MCF 10A (cell line): ENCODE measurements at regions of chr5 and their contacts with region 1.

Region 1: DNA sequence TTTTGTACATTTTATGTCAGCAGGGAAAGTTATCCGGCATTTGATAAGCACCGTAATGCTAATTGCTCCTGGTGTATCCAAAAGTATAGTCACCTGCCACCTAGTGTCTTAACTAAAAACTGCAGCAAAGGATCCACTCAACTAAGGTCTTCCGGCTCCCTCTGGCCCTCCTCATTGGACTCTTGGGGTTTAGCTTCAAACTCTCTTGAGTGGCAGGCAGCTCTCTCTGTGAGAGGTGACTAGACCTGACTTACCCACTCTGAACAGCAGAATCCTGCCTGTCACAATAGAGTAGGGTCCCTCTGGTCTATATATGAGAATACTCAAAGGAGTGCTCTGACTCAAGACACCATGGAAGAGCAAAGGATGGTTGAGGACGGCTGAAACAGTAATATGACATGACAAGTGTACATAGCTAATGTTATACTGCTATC is 60.3 kb upstream of the CAST start:
- DNase-seq: peak; percentile 86
- H3K4me3 Mint-ChIP-seq: no peak overlapping the region
- H3K27ac Mint-ChIP-seq: no peak overlapping the region
- H3K4me1 Mint-ChIP-seq: peaks cover 6% of the 10 kb centered on the region
- H3K27me3 Mint-ChIP-seq: no peaks in the 10 kb centered on the region
- CTCF ChIP-seq: peak; percentile 65

Region 2: DNA sequence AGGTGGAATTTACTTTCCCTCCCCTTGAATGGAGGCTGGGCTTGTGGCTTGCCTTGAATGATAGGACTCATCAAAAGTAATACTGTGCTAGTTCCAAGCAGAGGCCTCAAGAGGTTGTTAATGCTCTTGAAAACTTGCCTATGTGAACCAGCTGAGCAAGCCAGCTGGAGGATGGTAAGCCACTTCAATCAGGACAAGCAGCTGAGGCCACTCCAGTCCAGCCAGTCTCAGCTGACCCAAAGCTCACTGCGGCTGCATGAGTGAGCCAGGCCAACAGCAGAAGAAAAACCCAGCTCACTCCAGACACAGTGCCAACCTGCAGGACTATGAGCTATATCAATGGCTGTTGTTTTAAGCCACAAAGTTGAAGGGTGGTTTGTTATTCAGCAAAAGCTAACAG is 1499.7 kb before region 1 on chr5:
- CTCF ChIA-PET with region 1: no interaction called
- POLR2A ChIA-PET with region 1: no interaction called
- intact Hi-C with region 1: no loop called
- DNase-seq: no peak
- H3K4me3 Mint-ChIP-seq: no peak overlapping the region
- H3K27ac Mint-ChIP-seq: no peak overlapping the region
- H3K4me1 Mint-ChIP-seq: no peaks in the 10 kb centered on the region
- H3K27me3 Mint-ChIP-seq: no peaks in the 10 kb centered on the region
- CTCF ChIP-seq: no peak

Region 3: GRCh38 chr5:95961617-95962474 is 640.0 kb before region 1 on chr5 and contains the start of gene ELL2:
- CTCF ChIA-PET with region 1: interaction called, 3 read pairs
- POLR2A ChIA-PET with region 1: no interaction called
- intact Hi-C with region 1: loop called (anchors 5 kb)
- DNase-seq: peak; percentile 98
- H3K4me3 Mint-ChIP-seq: peak within 1 kb of the TSS; percentile 90
- H3K27ac Mint-ChIP-seq: peak within 1 kb of the TSS; percentile 91
- H3K4me1 Mint-ChIP-seq: peaks cover 28% of the 10 kb centered on the region
- H3K27me3 Mint-ChIP-seq: no peaks in the 10 kb centered on the region
- CTCF ChIP-seq: no peak
- total RNA-seq, gene ELL2: 144 and 147 TPM in 2 replicates

Region 4: DNA sequence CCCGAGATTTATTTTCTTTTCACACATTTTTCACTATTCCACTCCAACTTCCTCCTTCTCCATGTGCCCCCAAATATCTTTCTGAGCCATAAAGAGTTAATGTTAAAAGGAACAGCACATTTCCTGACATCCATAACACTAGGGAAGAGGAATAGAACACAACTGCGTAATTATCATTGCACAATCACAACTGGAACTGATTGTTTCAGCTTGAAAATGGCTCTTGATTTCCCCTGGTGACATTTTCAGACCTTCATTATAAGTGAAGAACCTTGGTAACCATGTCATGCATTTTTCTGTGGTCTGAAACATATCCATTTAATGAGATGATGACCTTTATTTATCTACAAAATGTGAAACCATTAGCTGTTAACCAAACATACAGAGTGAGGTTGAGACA is 251.2 kb before region 1 on chr5:
- CTCF ChIA-PET with region 1: interaction called, 492 read pairs
- POLR2A ChIA-PET with region 1: interaction called, 16 read pairs
- intact Hi-C with region 1: no loop called
- DNase-seq: peak; percentile 32
- H3K4me3 Mint-ChIP-seq: no peak overlapping the region
- H3K27ac Mint-ChIP-seq: peak overlapping the region; percentile 2
- H3K4me1 Mint-ChIP-seq: peaks cover 11% of the 10 kb centered on the region
- H3K27me3 Mint-ChIP-seq: no peaks in the 10 kb centered on the region
- CTCF ChIP-seq: no peak

Region 5: GRCh38 chr5:96463106-96463505 is 138.7 kb before region 1 on chr5:
- CTCF ChIA-PET with region 1: no interaction called
- POLR2A ChIA-PET with region 1: no interaction called
- intact Hi-C with region 1: no loop called
- DNase-seq: peak; percentile 64
- H3K4me3 Mint-ChIP-seq: no peak overlapping the region
- H3K27ac Mint-ChIP-seq: no peak overlapping the region
- H3K4me1 Mint-ChIP-seq: peaks cover 6% of the 10 kb centered on the region
- H3K27me3 Mint-ChIP-seq: no peaks in the 10 kb centered on the region
- CTCF ChIP-seq: no peak

Region 6: DNA sequence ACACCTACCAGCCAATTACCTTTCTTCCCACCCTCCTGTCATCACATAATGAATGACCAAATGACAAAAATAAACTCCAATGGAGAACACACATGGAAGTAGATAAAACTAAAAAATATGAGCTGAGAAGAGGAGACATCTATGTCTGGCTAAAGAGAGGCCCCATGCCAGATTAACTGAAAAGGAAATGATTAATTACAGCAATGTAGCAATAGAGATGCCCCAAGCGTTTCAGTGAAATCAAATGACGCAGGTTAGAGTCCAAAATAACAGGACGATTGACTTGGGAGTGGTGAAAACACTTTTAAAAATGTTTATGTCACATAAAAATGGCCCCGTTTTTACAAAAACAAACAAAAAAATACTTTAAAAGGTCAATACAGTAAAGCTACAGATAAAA is 109.2 kb before region 1 on chr5:
- CTCF ChIA-PET with region 1: interaction called, 10 read pairs
- POLR2A ChIA-PET with region 1: interaction called, 3 read pairs
- intact Hi-C with region 1: no loop called
- DNase-seq: peak; percentile 95
- H3K4me3 Mint-ChIP-seq: peak overlapping the region; percentile 40
- H3K27ac Mint-ChIP-seq: peak overlapping the region; percentile 96
- H3K4me1 Mint-ChIP-seq: peaks cover 10% of the 10 kb centered on the region
- H3K27me3 Mint-ChIP-seq: no peaks in the 10 kb centered on the region
- CTCF ChIP-seq: no peak

Region 7: GRCh38 chr5:96565582-96566265 is 36.1 kb before region 1 on chr5:
- CTCF ChIA-PET with region 1: interaction called, 13 read pairs
- POLR2A ChIA-PET with region 1: no interaction called
- intact Hi-C with region 1: no loop called
- DNase-seq: peak; percentile 65
- H3K4me3 Mint-ChIP-seq: no peak overlapping the region
- H3K27ac Mint-ChIP-seq: peak overlapping the region; percentile 27
- H3K4me1 Mint-ChIP-seq: peaks cover 25% of the 10 kb centered on the region
- H3K27me3 Mint-ChIP-seq: no peaks in the 10 kb centered on the region
- CTCF ChIP-seq: no peak

Region 8: DNA sequence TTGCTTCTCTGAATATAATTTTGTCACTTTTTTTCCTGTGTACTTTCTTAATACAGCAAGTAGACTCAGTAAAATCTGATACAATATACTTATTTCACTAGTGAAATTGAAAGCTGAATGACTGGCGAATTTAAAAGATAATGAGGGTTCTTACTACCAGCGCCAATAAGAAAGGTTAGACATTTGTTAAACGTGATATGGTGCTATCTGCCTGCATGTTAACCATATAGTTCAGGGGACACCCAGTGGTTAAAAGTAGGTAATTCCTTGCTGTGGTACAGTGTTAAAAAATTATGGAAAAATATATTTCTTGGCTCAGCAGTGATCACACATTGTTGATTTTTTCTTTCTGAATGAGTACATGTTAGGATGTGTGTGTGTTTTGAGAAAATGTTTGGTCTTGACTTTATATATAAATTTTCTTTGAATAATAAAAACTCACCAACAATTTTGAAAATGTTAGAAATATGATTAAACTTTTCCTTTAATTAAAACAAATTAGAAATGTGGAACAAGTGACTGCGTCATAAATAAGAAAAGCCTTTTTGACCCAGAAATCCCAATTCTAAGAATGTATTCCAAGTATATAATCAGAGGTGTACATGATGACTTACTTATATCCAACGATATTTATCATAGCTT is 86.1 kb after region 1 on chr5:
- CTCF ChIA-PET with region 1: interaction called, 15 read pairs
- POLR2A ChIA-PET with region 1: no interaction called
- intact Hi-C with region 1: no loop called
- DNase-seq: peak; percentile 66
- H3K4me3 Mint-ChIP-seq: peak overlapping the region; percentile 55
- H3K27ac Mint-ChIP-seq: peak overlapping the region; percentile 4
- H3K4me1 Mint-ChIP-seq: peaks cover 38% of the 10 kb centered on the region
- H3K27me3 Mint-ChIP-seq: no peaks in the 10 kb centered on the region
- CTCF ChIP-seq: peak; percentile 49